ENCODE measurements at regions of chr14 and their contacts with region 1.

Region 1: DNA sequence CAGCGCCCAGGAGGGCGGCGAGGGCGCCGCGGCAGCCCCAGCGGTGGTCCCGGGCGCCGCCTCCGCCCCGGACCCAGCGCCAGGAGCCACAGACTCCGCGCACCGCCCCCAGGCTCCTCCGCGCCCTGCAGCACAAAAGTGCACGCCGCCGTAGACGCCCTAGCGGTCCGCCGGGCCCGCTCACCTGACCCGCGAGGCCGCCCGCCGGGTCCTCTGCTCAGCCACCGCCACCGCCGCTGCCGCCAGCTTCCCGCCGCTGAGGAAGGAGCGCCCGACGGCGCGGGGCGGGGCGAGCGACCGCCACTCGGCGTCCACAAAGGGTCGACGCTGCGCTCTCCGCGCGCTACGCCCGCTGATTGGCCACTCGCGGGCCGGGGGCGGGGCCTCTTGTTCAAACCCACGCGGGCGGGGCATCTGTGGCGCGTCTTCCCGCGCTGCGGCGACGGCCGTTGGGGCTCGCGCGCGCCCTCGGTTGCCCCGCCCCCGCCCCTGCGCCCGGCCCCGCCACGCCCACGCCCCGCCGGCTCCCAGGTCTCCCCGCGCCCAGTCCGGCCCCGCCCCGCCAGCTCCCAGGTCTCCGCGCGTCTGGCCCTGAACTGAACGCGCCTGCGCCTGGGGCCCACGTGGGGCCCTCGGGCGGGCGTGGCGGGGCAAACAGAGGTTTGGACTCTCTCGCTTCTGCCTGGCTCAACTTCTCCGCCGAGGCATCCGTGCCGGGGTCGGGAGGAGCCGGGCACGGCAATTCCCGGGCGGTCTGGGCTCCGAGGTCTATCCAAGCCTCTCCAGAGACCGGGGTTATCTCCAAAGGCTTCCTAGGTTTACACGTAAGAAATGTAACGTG is at the start of gene CDCA4:
- DNase-seq: peak; percentile 97
- H3K4me3 Mint-ChIP-seq: peak within 1 kb of the TSS; percentile 99
- H3K27ac Mint-ChIP-seq: peak within 1 kb of the TSS; percentile 86
- H3K4me1 Mint-ChIP-seq: peaks cover 72% of the 10 kb centered on the region
- H3K27me3 Mint-ChIP-seq: no peaks in the 10 kb centered on the region
- total RNA-seq, gene CDCA4: 62.5 and 63.7 TPM in 2 replicates

Region 2: GRCh38 chr14:104436047-104436591 is 584.9 kb before region 1 on chr14:
- intact Hi-C with region 1: no loop called
- DNase-seq: no peak
- H3K4me3 Mint-ChIP-seq: no peak overlapping the region
- H3K27ac Mint-ChIP-seq: no peak overlapping the region
- H3K4me1 Mint-ChIP-seq: no peaks in the 10 kb centered on the region
- H3K27me3 Mint-ChIP-seq: no peaks in the 10 kb centered on the region

Region 3: GRCh38 chr14:104976198-104977007 is 44.6 kb before region 1 on chr14:
- intact Hi-C with region 1: loop called (anchors 1 kb)
- DNase-seq: peak; percentile 77
- H3K4me3 Mint-ChIP-seq: peak overlapping the region; percentile 64
- H3K27ac Mint-ChIP-seq: peak overlapping the region; percentile 35
- H3K4me1 Mint-ChIP-seq: peaks cover 11% of the 10 kb centered on the region
- H3K27me3 Mint-ChIP-seq: peaks cover 24% of the 10 kb centered on the region

Region 4: GRCh38 chr14:104985675-104986525 is 35.1 kb before region 1 on chr14 and contains the start of gene CLBA1:
- intact Hi-C with region 1: loop called (anchors 1 kb)
- DNase-seq: peak; percentile 87
- H3K4me3 Mint-ChIP-seq: peak within 1 kb of the TSS; percentile 71
- H3K27ac Mint-ChIP-seq: peak within 1 kb of the TSS; percentile 64
- H3K4me1 Mint-ChIP-seq: no peaks in the 10 kb centered on the region
- H3K27me3 Mint-ChIP-seq: peaks cover 7% of the 10 kb centered on the region
- total RNA-seq, gene CLBA1: 3.1 TPM in 2 replicates

Region 5: DNA sequence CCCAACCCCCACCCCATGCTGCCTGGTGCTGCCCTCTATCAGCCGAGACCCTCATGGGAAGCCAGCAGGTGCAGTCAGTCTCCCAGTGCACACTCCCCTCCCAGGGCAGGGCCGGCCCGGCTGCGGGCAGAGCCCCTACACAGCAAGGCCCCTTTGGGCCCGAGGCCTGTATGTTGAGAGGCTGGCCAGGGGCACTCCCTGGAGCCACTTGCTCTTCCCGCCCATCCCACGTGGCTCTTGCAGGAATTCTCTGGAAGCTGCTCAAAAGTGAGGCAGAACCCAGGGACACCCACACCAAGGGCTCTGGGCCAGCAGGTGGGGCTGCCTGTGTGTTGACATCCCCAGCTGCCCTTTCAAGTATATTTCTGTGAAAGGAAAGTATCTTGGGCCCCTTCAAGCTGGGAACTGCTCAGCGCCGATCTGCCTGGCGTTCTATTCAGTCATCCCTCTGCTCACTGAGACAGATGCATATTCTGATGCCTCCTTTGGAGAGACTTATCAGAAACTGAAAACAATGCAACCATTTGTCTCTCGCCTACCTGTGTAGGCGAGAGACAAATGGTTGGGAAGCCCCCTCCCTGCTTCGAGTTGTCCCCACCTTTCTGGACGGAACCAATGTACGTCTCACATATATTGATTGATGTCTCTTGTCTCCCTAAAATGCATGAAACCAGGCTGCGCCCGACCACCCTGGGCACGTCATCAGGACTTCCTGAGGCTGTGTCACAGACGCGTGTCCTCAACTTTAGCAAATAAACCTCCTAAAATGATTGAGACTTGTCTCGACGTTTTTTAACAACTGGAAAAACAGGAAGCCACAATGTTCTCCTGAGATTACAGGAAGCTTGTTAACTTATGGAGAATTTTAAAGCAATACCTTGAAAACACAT is 38.2 kb after region 1 on chr14:
- intact Hi-C with region 1: loop called (anchors 1 kb)
- DNase-seq: no peak
- H3K4me3 Mint-ChIP-seq: peak overlapping the region; percentile 80
- H3K27ac Mint-ChIP-seq: peak overlapping the region; percentile 100
- H3K4me1 Mint-ChIP-seq: peaks cover 45% of the 10 kb centered on the region
- H3K27me3 Mint-ChIP-seq: no peaks in the 10 kb centered on the region

Region 6: DNA sequence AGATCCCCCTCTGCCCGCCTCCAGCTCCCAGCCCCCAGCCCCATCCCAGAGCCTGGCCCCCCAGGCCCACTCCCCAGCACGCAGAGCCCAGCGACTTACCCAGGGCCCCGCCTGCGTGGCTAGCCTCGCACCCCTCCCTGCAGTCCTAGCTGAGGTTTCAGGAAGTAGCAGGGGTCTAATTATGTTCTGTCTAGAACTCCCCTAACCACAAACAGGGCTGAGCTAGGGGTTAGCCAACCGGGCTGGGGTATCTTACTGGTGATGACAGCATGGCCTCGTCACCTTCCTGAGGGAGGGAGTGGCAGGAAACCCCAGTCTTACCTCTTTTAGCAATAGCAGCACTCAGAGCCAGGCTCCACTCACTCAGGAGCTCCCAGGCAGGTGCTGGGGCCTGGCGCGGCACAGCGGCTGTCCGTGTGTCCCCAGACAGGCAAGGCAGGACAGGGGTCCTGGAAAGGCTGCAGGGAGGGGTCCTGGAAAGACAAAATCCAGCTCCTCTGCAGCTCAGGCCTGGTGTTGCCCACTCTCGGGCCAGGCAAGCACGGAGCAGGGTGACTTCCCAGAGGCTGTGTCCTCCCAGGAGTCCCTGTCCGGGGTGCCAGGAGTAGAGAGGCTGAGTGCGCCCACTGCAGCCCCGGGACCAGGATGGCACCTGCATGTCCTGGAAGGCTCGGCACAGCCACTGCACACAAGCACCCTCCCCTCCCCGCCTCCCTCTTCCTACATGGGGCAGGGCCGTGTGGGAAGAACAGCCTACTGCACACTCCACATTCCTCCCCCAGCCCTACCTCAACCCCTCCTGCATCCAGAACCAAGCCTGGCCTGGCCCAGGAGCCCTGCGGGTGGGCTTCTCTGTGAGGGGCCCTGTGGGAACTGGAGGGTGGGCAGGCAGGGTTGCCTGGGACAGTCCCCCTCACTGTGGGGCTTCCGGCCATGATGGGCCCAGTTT is 44.5 kb after region 1 on chr14 and contains the start of gene GPR132:
- intact Hi-C with region 1: loop called (anchors 1 kb)
- DNase-seq: peak; percentile 89
- H3K4me3 Mint-ChIP-seq: peak within 1 kb of the TSS; percentile 89
- H3K27ac Mint-ChIP-seq: peak within 1 kb of the TSS; percentile 90
- H3K4me1 Mint-ChIP-seq: peaks cover 62% of the 10 kb centered on the region
- H3K27me3 Mint-ChIP-seq: no peaks in the 10 kb centered on the region
- total RNA-seq, gene GPR132: 24.6 and 24.9 TPM in 2 replicates

Measured in activated T-helper 1 cell treated with anti-CD3 and anti-CD28 coated beads, Interleukin-12 subunit alpha, Interleukin-12 subunit beta, Interleukin-2, Interleukin-4 antibody, amounts not matched to agents 30 ng/mL and 10 ng/mL and 1 ng/mL, durations not matched to agents 14 hours and 24 hours and 36 hours (primary cell).